CD4-positive, alpha-beta T cell (primary cell): ENCODE measurements at regions of chr14 and their contacts with region 1.

Region 1: GRCh38 chr14:105086833-105087307 is 21.6 kb upstream of the GPR132 start:
- DNase-seq: peak; percentile 72 to 92 (median 86)
- ATAC-seq: peak; percentile 89
- H3K4me3 ChIP-seq: peak overlapping the region; percentile 60
- H3K4me3 Mint-ChIP-seq: peak overlapping the region; percentile 72
- H3K27ac ChIP-seq: peak overlapping the region in 1 of 2 donors; percentile 46
- H3K27ac Mint-ChIP-seq: no peak overlapping the region
- H3K4me1 ChIP-seq: peaks cover 35% of the 10 kb centered on the region
- H3K4me1 Mint-ChIP-seq: peaks cover 12% of the 10 kb centered on the region
- H3K27me3 ChIP-seq: peaks cover 0 to 5% of the 10 kb centered on the region in 2 experiments
- H3K27me3 Mint-ChIP-seq: no peaks in the 10 kb centered on the region
- CTCF ChIP-seq: peak; percentile 83

Region 2: GRCh38 chr14:104976198-104977007 is 110.5 kb before region 1 on chr14:
- CTCF ChIA-PET with region 1: interaction called, 7 read pairs
- POLR2A ChIA-PET with region 1: no interaction called
- intact Hi-C with region 1: loop called (anchors 2 kb)
- DNase-seq: peak; percentile 76 to 92 (median 85)
- ATAC-seq: peak; percentile 79
- H3K4me3 ChIP-seq: no peak overlapping the region
- H3K4me3 Mint-ChIP-seq: peak overlapping the region; percentile 90
- H3K27ac ChIP-seq: no peak overlapping the region
- H3K27ac Mint-ChIP-seq: no peak overlapping the region
- H3K4me1 ChIP-seq: peaks cover 23% of the 10 kb centered on the region
- H3K4me1 Mint-ChIP-seq: peaks cover 5% of the 10 kb centered on the region
- H3K27me3 ChIP-seq: peaks cover 25 to 29% of the 10 kb centered on the region in 2 experiments
- H3K27me3 Mint-ChIP-seq: peaks cover 36% of the 10 kb centered on the region
- CTCF ChIP-seq: peak; percentile 89

Region 3: GRCh38 chr14:105065280-105066228 is 21.3 kb before region 1 on chr14 and contains the start of gene GPR132:
- CTCF ChIA-PET with region 1: interaction called, 75 read pairs
- POLR2A ChIA-PET with region 1: interaction called, 40 read pairs
- intact Hi-C with region 1: loop called in 1 of 2 experiments (anchors 1 kb)
- DNase-seq: peak; percentile 81 to 99 (median 86)
- ATAC-seq: peak; percentile 87
- H3K4me3 ChIP-seq: peak within 1 kb of the TSS; percentile 82
- H3K4me3 Mint-ChIP-seq: peak within 1 kb of the TSS; percentile 100
- H3K27ac ChIP-seq: peak within 1 kb of the TSS; percentile 94 to 95
- H3K27ac Mint-ChIP-seq: peak within 1 kb of the TSS; percentile 91
- H3K4me1 ChIP-seq: peaks cover 98% of the 10 kb centered on the region
- H3K4me1 Mint-ChIP-seq: peaks cover 72% of the 10 kb centered on the region
- H3K27me3 ChIP-seq: no peaks in the 10 kb centered on the region
- H3K27me3 Mint-ChIP-seq: no peaks in the 10 kb centered on the region
- CTCF ChIP-seq: no peak
- total RNA-seq, gene GPR132: 64.4 to 66.7 TPM

Region 4: DNA sequence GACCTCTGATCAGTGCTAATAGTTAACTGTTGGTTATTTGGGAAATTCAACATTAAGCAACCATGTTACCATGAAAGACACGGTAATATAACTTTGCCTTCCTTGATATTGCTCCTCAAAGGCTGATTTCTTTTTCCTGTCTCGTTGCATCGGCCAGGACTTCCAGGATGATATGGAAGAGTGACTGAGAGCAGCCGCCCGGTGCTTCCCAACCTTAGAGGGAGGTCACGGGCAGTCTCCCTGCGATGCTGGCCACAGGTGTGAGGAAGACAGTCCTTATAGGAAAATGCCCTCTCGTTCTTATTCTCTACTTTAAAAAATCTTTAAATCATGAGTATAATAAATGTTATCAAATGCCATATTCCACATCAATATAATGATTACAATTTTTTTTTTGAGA is 11.4 kb after region 1 on chr14:
- CTCF ChIA-PET with region 1: no interaction called
- POLR2A ChIA-PET with region 1: no interaction called
- intact Hi-C with region 1: no loop called
- DNase-seq: no peak
- ATAC-seq: no peak
- H3K4me3 ChIP-seq: no peak overlapping the region
- H3K4me3 Mint-ChIP-seq: no peak overlapping the region
- H3K27ac ChIP-seq: no peak overlapping the region
- H3K27ac Mint-ChIP-seq: no peak overlapping the region
- H3K4me1 ChIP-seq: peaks cover 12% of the 10 kb centered on the region
- H3K4me1 Mint-ChIP-seq: peaks cover 7% of the 10 kb centered on the region
- H3K27me3 ChIP-seq: peaks cover 5 to 8% of the 10 kb centered on the region in 2 experiments
- H3K27me3 Mint-ChIP-seq: peaks cover 5% of the 10 kb centered on the region
- CTCF ChIP-seq: no peak

Region 5: DNA sequence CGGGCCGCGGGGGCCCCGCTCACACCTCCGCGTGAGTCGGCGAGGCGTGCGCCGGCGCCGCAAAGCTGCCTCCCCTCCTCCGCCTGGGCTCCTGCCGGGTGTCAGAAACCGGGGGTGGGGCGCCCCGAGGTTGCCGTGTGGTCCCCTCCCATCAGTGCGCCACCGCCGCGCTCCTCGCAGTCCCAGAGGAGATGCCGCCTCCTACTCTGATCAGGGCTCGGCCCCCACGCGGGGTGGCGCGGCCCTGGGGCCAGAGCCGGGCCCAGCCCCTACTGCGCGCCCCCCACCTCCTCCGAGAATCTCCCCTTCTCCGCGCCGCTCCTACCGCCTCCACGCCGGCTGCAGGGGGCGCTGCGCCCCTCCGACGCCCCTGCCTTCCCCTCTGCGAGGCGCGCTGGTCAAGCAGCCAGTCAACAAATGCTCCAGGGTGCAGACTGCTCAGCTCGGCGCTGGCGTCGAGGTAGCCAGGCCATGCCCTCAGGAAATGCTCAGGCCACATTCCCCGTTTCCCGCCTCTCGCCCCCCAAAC is 82.2 kb after region 1 on chr14:
- CTCF ChIA-PET with region 1: interaction called, 5 read pairs
- POLR2A ChIA-PET with region 1: no interaction called
- intact Hi-C with region 1: loop called in 1 of 2 experiments (anchors 5 kb)
- DNase-seq: peak in 8 of 14 experiments; percentile 15 to 70 (median 32)
- ATAC-seq: peak; percentile 56
- H3K4me3 ChIP-seq: no peak overlapping the region
- H3K4me3 Mint-ChIP-seq: peak overlapping the region; percentile 48
- H3K27ac ChIP-seq: no peak overlapping the region
- H3K27ac Mint-ChIP-seq: no peak overlapping the region
- H3K4me1 ChIP-seq: peaks cover 37% of the 10 kb centered on the region
- H3K4me1 Mint-ChIP-seq: peaks cover 7% of the 10 kb centered on the region
- H3K27me3 ChIP-seq: peaks cover 26 to 28% of the 10 kb centered on the region in 2 experiments
- H3K27me3 Mint-ChIP-seq: peaks cover 22% of the 10 kb centered on the region
- CTCF ChIP-seq: peak; percentile 42

Region 6: DNA sequence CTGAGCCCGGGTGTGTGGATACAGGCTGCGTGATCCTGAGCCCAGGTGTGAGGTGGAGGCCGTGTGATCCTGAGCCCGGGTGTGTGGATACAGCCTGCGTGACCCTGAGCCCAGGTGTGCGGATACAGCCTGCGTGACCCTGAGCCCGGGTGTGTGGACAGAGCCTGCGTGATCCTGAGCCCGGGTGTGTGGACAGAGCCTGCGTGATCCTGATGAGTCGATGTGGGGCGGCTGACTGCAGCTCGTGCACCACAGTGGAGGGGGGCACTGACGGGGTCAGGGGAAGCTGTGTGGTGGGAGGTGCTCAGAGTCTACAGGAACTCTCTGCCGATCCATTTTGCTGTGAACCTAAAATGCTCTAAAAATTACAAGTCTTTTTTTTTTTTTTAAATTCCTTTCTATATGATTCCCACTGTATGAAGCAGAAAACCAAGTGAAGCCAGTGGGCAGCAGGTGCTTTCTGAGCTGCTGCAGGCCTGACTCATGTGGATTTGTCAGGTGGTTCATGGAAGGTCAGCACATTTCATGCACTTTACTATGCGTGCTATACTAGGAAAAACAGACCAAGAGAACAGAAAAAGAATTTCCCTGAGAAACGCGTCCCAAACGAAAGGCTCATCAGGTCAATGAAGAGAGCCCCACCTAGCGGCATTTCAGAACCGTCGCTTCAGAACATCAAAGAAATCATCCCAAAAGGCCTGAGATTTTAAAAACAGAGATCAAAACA is 194.7 kb after region 1 on chr14:
- CTCF ChIA-PET with region 1: no interaction called
- POLR2A ChIA-PET with region 1: interaction called, 3 read pairs
- intact Hi-C with region 1: loop called in 1 of 2 experiments (anchors 1 kb)
- DNase-seq: peak in 4 of 14 experiments; percentile 43 to 67 (median 57)
- ATAC-seq: no peak
- H3K4me3 ChIP-seq: no peak overlapping the region
- H3K4me3 Mint-ChIP-seq: no peak overlapping the region
- H3K27ac ChIP-seq: no peak overlapping the region
- H3K27ac Mint-ChIP-seq: no peak overlapping the region
- H3K4me1 ChIP-seq: peaks cover 23% of the 10 kb centered on the region
- H3K4me1 Mint-ChIP-seq: peaks cover 36% of the 10 kb centered on the region
- H3K27me3 ChIP-seq: no peaks in the 10 kb centered on the region
- H3K27me3 Mint-ChIP-seq: no peaks in the 10 kb centered on the region
- CTCF ChIP-seq: peak; percentile 59

Region 7: DNA sequence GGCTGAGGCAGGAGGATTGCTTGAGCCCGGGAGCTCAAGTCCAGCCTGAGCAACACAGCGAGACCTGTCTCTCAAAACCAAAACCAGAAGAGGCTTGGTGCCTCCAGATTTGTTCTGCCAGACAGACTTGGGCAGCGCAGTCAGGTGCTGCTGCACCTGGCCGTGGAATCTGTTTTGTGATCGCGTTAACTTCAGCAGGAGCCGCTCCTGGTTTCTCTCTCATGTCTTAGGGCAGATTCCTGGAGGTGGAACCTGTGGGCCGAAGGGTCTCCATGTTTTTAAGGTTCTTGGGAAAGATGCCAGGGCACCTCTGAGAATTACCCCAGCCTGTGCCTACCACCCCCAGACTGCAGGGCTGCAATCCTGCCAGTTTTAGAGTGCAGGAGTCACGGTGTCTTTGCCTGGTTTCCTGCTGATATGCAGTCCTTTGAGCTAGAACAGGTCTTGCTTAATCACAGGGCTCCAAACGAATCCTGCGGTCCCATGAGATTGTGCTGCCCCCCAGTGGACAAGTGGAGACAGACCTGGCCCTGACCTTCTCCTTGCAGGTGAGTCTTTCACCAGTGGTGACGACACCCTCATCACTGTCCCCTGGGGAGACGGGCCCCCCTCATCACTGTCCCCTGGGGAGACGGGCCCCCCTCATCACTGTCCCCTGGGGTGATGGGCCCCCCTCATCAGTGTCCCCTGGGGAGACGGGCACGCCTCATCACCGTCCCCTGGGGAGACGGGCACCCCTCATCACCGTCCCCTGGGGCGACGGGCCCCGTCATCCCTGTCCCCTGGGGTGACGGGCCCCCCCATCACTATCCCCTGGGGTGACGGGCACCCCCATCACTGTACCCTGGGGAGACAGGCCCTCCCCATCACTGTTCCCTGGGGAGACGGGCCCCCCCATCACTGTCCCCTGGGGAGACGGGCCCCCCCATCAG is 265.3 kb after region 1 on chr14:
- CTCF ChIA-PET with region 1: interaction called, 7 read pairs
- POLR2A ChIA-PET with region 1: interaction called, 3 read pairs
- intact Hi-C with region 1: loop called (anchors 1 kb)
- DNase-seq: peak; percentile 80 to 93 (median 87)
- ATAC-seq: peak; percentile 100
- H3K4me3 ChIP-seq: no peak overlapping the region
- H3K4me3 Mint-ChIP-seq: no peak overlapping the region
- H3K27ac ChIP-seq: no peak overlapping the region
- H3K27ac Mint-ChIP-seq: no peak overlapping the region
- H3K4me1 ChIP-seq: peaks cover 5% of the 10 kb centered on the region
- H3K4me1 Mint-ChIP-seq: peaks cover 4% of the 10 kb centered on the region
- H3K27me3 ChIP-seq: no peaks in the 10 kb centered on the region
- H3K27me3 Mint-ChIP-seq: no peaks in the 10 kb centered on the region
- CTCF ChIP-seq: peak; percentile 74